Activated CD4-positive, alpha-beta memory T cell treated with anti-CD3 and anti-CD28 coated beads for 36 hours (primary cell): ENCODE measurements at regions of chr3 and their contacts with region 1.

Region 1: GRCh38 chr3:101849051-101849720 is at the start of gene NFKBIZ:
- DNase-seq: peak; percentile 97
- H3K4me3 Mint-ChIP-seq: peak within 1 kb of the TSS; percentile 92
- H3K27ac Mint-ChIP-seq: peak within 1 kb of the TSS; percentile 99
- H3K4me1 Mint-ChIP-seq: peaks cover 45% of the 10 kb centered on the region
- H3K27me3 Mint-ChIP-seq: no peaks in the 10 kb centered on the region
- total RNA-seq, gene NFKBIZ: 65.9 to 74.9 TPM

Region 2: GRCh38 chr3:101676765-101677435 is 172.3 kb before region 1 on chr3 and contains the start of gene ZBTB11:
- CTCF ChIA-PET with region 1: no interaction called
- POLR2A ChIA-PET with region 1: interaction called, 6 read pairs
- intact Hi-C with region 1: loop called (anchors 1 kb)
- DNase-seq: peak; percentile 100
- H3K4me3 Mint-ChIP-seq: peak within 1 kb of the TSS; percentile 93
- H3K27ac Mint-ChIP-seq: peak within 1 kb of the TSS; percentile 91
- H3K4me1 Mint-ChIP-seq: peaks cover 57% of the 10 kb centered on the region
- H3K27me3 Mint-ChIP-seq: no peaks in the 10 kb centered on the region
- total RNA-seq, gene ZBTB11: 28.0 to 30.3 TPM

Region 3: GRCh38 chr3:101724329-101725193 is 124.6 kb before region 1 on chr3 and contains the start of gene CEP97:
- CTCF ChIA-PET with region 1: interaction called, 3 read pairs
- POLR2A ChIA-PET with region 1: interaction called, 6 read pairs
- intact Hi-C with region 1: loop called (anchors 1 kb)
- DNase-seq: peak; percentile 92
- H3K4me3 Mint-ChIP-seq: peak within 1 kb of the TSS; percentile 99
- H3K27ac Mint-ChIP-seq: peak within 1 kb of the TSS; percentile 99
- H3K4me1 Mint-ChIP-seq: peaks cover 46% of the 10 kb centered on the region
- H3K27me3 Mint-ChIP-seq: no peaks in the 10 kb centered on the region
- total RNA-seq, gene CEP97: 16.6 to 17.9 TPM

Region 4: DNA sequence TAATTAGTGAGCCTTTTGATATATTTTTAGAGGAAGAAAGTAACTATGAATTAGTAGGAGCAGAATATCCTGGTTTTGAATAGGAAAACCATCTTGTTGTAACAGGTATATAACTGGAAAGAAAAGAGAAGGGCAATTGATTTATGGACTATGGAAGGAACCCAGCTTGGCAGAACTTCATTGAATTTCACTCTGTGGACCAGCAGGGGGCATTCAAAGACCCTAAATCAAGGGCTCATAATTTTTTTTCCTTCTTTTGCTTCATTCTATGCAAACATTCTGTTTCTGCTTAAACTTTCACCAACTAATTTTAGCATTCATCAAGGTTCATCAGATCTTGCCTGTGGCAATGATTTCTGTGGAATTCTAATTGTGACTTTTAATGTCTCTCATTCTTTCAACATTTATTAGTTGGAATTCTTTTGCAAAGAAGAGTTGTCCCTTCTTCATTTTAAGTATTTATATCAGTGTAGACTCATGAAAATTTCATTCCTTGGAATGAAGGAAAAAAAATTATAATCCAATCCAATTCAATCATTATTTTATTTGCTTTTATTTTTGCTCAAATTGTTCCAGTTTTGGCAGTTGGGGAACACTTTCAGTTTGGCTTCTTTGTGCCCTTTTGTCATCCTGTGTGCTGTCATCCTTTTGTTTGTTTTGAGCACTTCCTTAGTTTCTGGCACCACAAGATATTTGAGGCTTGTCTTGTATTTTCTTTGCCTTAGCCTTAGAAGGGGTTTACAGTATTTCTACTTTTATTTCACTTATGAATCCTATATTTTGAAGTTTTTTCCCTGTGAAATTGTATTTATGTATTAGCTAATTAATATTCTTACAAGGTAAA is 39.8 kb before region 1 on chr3:
- CTCF ChIA-PET with region 1: interaction called, 6 read pairs
- POLR2A ChIA-PET with region 1: interaction called, 5 read pairs
- intact Hi-C with region 1: loop called (anchors 1 kb)
- DNase-seq: peak; percentile 31
- H3K4me3 Mint-ChIP-seq: no peak overlapping the region
- H3K27ac Mint-ChIP-seq: no peak overlapping the region
- H3K4me1 Mint-ChIP-seq: peaks cover 43% of the 10 kb centered on the region
- H3K27me3 Mint-ChIP-seq: no peaks in the 10 kb centered on the region

Region 5: DNA sequence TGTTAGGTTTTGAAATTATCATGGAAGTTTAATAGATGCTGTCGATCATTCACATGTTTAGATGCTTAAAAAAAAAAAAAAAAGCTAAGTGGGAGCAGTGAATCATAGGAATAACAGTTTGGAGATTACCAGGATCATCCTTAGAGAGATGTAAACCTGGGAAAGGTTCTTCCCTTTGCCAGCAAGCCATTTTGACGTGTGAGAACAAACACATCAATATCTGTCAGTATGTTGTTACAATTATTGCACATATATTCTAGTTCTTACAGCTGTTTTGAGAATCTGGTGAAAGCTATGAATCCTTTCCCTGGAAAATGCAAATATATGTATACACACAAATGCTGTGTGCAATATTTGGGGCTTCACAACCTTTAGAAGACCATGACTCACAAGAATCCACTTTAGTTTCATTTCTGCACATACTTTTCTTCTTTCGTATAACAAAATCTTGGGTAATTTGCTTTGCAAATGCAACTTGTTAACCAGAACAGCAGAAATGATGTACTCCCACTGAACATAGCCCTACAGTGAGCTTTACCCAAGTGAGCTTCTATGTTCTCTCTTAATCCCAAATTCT is 12.1 kb after region 1 on chr3:
- CTCF ChIA-PET with region 1: no interaction called
- POLR2A ChIA-PET with region 1: interaction called, 15 read pairs
- intact Hi-C with region 1: loop called (anchors 1 kb)
- DNase-seq: no peak
- H3K4me3 Mint-ChIP-seq: no peak overlapping the region
- H3K27ac Mint-ChIP-seq: no peak overlapping the region
- H3K4me1 Mint-ChIP-seq: peaks cover 64% of the 10 kb centered on the region
- H3K27me3 Mint-ChIP-seq: no peaks in the 10 kb centered on the region

Region 6: DNA sequence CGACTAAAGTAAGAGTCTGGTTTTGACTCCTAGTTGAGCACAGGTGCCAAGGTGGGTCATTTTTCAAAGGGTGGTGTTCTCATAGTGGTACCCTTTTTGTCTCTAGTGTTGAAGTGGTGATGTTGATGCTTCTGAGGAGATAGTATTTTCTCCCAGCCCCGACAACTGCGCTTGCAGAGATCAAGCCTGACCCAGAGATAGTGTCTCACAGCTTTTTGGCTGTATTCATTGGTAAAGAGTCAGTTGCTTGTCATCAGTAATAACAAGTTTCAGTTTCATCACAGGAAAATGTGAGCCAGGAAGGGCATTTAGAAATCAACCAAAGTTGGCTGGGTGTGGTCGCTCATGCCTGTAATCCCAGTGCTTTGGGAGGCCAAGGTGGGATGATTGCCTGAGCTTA is 139.4 kb after region 1 on chr3:
- CTCF ChIA-PET with region 1: no interaction called
- POLR2A ChIA-PET with region 1: interaction called, 3 read pairs
- intact Hi-C with region 1: loop called (anchors 1 kb)
- DNase-seq: peak; percentile 40
- H3K4me3 Mint-ChIP-seq: no peak overlapping the region
- H3K27ac Mint-ChIP-seq: no peak overlapping the region
- H3K4me1 Mint-ChIP-seq: peaks cover 29% of the 10 kb centered on the region
- H3K27me3 Mint-ChIP-seq: peaks cover 11% of the 10 kb centered on the region

Region 7: GRCh38 chr3:102069211-102069662 is 220.1 kb after region 1 on chr3:
- CTCF ChIA-PET with region 1: no interaction called
- POLR2A ChIA-PET with region 1: no interaction called
- intact Hi-C with region 1: no loop called
- DNase-seq: no peak
- H3K4me3 Mint-ChIP-seq: no peak overlapping the region
- H3K27ac Mint-ChIP-seq: no peak overlapping the region
- H3K4me1 Mint-ChIP-seq: peaks cover 6% of the 10 kb centered on the region
- H3K27me3 Mint-ChIP-seq: no peaks in the 10 kb centered on the region